ENCODE measurements at regions of chr10 and their contacts with region 1.

Region 1: DNA sequence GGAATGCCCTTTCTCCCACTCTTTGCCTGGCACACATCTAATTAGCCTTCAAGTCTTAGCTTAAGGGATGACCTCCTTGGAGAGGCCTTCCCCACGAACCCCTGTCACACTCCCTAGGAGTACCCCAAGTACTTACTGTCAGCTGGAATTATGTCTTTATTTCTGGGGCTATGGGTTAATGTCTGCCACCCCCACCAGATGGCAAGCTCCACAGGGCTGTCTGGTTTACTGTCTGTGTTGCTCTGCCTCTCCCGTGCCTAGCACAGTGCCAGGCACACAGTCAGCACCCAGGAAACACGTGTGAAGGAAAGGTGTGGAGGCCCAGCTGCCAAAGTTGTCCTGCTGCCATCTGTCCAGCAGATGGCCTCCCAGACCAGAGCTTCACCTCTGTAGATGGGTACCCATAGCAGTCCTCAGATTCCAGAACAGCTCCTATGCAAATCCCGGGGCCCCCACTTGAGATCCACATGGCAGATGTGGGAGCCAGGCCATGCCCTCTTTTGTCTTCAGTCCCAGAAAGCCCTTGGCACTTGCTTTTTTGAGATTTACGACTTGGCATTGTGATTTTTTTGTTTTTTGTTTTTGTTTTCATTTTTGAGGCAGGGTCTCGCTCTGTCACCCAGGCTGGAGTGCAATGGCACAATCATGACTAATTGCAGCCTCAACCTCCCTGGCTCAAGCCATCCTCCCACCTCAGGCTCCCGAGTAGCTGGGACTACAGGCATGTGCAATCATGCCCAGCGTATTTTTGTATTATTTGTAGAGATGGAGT is 17.2 kb upstream of the PALD1 start:
- DNase-seq: peak; percentile 64 to 87
- ATAC-seq: peak; percentile 88 to 91
- H3K4me3 ChIP-seq: no peak overlapping the region
- H3K27ac ChIP-seq: no peak overlapping the region
- H3K4me1 ChIP-seq: peaks cover 5% of the 10 kb centered on the region
- CTCF ChIP-seq: peak; percentile 84
- EP300 ChIP-seq: no peak
- POLR2A ChIP-seq: no peak
- RAD21 ChIP-seq: peak; percentile 88 to 92

Region 2: GRCh38 chr10:70331486-70332268 is 129.7 kb before region 1 on chr10:
- CTCF ChIA-PET with region 1: no interaction called
- POLR2A ChIA-PET with region 1: no interaction called
- DNase-seq: peak; percentile 62 to 84
- ATAC-seq: peak; percentile 81 to 83
- H3K4me3 ChIP-seq: no peak overlapping the region
- H3K27ac ChIP-seq: peak overlapping the region; percentile 40 to 73; a peak in 5 of 6 replicates
- H3K4me1 ChIP-seq: peaks cover 16% of the 10 kb centered on the region
- CTCF ChIP-seq: no peak
- EP300 ChIP-seq: no peak
- POLR2A ChIP-seq: no peak
- RAD21 ChIP-seq: peak in 1 of 2 experiments; percentile 30; a peak in 2 of 5 replicates

Region 3: GRCh38 chr10:70441161-70441894 is 20.1 kb before region 1 on chr10 and contains the start of gene NODAL:
- CTCF ChIA-PET with region 1: interaction called, 86 read pairs
- POLR2A ChIA-PET with region 1: no interaction called
- DNase-seq: no peak
- ATAC-seq: no peak; a peak in 1 of 6 replicates
- H3K4me3 ChIP-seq: no peak within 1 kb of the TSS
- H3K27ac ChIP-seq: no peak within 1 kb of the TSS
- H3K4me1 ChIP-seq: no peaks in the 10 kb centered on the region
- CTCF ChIP-seq: no peak
- EP300 ChIP-seq: no peak
- POLR2A ChIP-seq: no peak
- RAD21 ChIP-seq: no peak
- polyA plus RNA-seq, gene NODAL: not detected in 2 replicates

Region 4: DNA sequence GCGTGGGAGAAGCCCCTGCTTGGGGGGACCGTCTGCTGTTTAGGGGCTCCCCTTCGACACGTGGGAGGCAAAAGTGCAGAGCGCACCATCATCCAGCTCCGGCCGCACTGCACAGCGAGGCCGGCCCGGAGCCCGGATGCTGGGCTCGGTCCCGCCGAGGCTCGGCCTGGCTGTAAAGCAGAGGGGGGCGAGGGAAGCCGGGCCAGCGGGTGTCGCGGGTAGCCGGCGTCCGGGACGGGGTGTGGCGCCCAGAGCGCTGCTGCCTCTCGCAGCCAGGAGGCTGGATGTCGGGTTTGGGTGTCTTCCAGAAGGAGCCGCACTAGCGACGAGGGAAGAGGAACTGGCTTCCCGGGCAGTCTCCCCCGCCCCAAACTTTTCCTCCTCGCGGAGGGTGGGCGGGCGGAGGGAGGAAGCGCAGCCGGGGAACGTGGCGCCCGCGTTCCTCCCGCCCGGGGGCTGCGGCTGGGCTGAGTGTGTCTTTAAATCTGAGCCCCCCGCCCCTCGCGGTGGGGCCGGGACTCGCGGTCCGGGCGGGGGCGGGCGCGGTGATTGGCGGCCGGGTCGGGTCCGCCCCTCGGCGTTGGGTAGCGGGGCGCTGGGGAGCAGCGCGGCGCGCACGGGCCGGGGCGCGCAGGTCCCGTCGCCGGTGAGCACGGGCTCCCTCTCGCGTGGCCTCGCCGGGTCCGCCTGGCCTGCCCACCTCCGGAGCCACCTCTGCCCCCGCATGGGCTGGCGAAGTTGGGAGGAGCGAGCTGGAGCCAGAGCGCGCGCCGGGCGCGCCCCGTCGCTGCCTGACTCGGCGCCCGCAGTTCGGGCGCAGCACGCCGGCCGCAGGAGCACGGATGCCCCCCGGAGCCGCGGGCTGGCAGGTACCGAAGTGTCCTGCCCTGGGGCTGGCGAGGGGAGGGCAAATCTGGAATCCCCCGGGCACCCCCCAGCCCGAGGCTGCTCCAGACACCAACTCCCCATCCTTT is 17.1 kb after region 1 on chr10 and contains the start of gene PALD1:
- CTCF ChIA-PET with region 1: interaction called, 53 read pairs
- POLR2A ChIA-PET with region 1: no interaction called
- DNase-seq: peak; percentile 61 to 71
- ATAC-seq: peak; percentile 56 to 83
- H3K4me3 ChIP-seq: peak within 1 kb of the TSS; percentile 78
- H3K27ac ChIP-seq: peak within 1 kb of the TSS; percentile 75 to 95
- H3K4me1 ChIP-seq: peaks cover 32% of the 10 kb centered on the region; the same call in 2 of the 3 replicates
- CTCF ChIP-seq: no peak
- EP300 ChIP-seq: no peak
- POLR2A ChIP-seq: peak; percentile 73
- RAD21 ChIP-seq: no peak
- polyA plus RNA-seq, gene PALD1: 3.3 and 3.6 TPM in 2 replicates

Region 5: GRCh38 chr10:70540089-70540788 is 78.8 kb after region 1 on chr10:
- CTCF ChIA-PET with region 1: interaction called, 376 read pairs
- POLR2A ChIA-PET with region 1: no interaction called
- DNase-seq: peak; percentile 27 to 58
- ATAC-seq: peak; percentile 55 to 85; a peak in 5 of 6 replicates
- H3K4me3 ChIP-seq: no peak overlapping the region
- H3K27ac ChIP-seq: no peak overlapping the region
- H3K4me1 ChIP-seq: no peaks in the 10 kb centered on the region
- CTCF ChIP-seq: peak; percentile 60; the same call in 2 of the 3 replicates
- EP300 ChIP-seq: no peak
- POLR2A ChIP-seq: no peak
- RAD21 ChIP-seq: peak; percentile 68 to 74

Region 6: GRCh38 chr10:70880077-70880534 is 418.7 kb after region 1 on chr10:
- CTCF ChIA-PET with region 1: interaction called, 15 read pairs
- POLR2A ChIA-PET with region 1: no interaction called
- DNase-seq: peak; percentile 72 to 80
- ATAC-seq: peak; percentile 86 to 95
- H3K4me3 ChIP-seq: no peak overlapping the region
- H3K27ac ChIP-seq: no peak overlapping the region
- H3K4me1 ChIP-seq: no peaks in the 10 kb centered on the region
- CTCF ChIP-seq: peak; percentile 92
- EP300 ChIP-seq: no peak
- POLR2A ChIP-seq: no peak
- RAD21 ChIP-seq: peak; percentile 83 to 85

Measured in A549 (cell line).